PC-9 (cell line): ENCODE measurements at regions of chr10 and their contacts with region 1.

Region 1: GRCh38 chr10:124418726-124419501 is at the start of gene OAT:
- DNase-seq: peak; percentile 87 to 92
- H3K4me3 ChIP-seq: peak within 1 kb of the TSS; percentile 79
- H3K27ac ChIP-seq: peak within 1 kb of the TSS; percentile 56; the same call in 1 of the 2 replicates
- H3K4me1 ChIP-seq: peaks cover 18% of the 10 kb centered on the region; the same call in 1 of the 2 replicates
- H3K27me3 ChIP-seq: no peaks in the 10 kb centered on the region
- CTCF ChIP-seq: no peak; the same call in 1 of the 2 replicates
- total RNA-seq, gene OAT: 73.8 and 130 TPM in 2 replicates

Region 2: GRCh38 chr10:124429576-124429975 is 10.7 kb after region 1 on chr10:
- CTCF ChIA-PET with region 1: no interaction called
- POLR2A ChIA-PET with region 1: interaction called, 11 read pairs
- intact Hi-C with region 1: no loop called
- DNase-seq: no peak
- H3K4me3 ChIP-seq: no peak overlapping the region
- H3K27ac ChIP-seq: no peak overlapping the region
- H3K4me1 ChIP-seq: peaks cover 13% of the 10 kb centered on the region
- H3K27me3 ChIP-seq: no peaks in the 10 kb centered on the region
- CTCF ChIP-seq: no peak

Region 3: DNA sequence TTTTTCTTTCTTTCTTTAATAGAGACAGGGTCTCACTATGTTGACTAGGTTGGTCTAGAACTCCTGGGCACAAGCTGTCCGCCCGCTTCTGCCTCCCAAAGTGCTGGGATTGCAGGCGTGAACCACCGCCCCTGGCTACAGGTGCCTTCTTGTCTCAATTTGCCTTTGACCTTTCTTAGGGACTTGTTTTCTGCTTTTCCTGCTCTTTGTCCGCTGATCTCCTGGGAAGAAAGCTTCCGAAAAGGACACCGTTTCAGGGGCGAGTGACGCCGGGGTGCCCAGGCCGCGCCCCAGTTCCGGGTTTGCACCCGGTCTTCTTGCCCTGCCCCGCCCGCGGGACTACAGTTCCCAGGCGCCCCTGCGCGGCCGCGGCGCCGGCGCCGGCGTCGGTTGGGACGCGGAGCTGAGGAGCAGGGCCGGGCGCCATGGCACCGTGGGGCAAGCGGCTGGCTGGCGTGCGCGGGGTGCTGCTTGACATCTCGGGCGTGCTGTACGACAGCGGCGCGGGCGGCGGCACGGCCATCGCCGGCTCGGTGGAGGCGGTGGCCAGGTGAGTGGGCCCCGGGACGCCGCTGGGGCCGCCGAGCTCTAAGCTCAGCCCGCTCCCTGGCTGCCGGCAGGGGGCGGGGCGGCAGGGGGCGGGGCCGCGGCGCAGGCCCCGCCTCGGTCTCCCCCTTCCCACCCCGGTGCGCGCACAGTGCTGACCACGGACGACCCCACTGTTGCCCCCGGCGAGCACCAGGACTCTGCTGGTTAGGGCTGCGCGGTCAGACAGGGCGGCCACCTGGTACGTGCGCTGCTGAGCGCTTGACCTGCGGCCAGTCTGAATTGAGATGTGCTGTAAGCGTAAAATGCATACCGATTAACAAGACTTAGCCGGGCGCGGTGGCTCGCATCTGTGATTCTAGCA is 42.8 kb after region 1 on chr10 and contains the start of gene LHPP:
- CTCF ChIA-PET with region 1: no interaction called
- POLR2A ChIA-PET with region 1: interaction called, 6 read pairs
- intact Hi-C with region 1: loop called (anchors 1 kb)
- DNase-seq: peak; percentile 53 to 71
- H3K4me3 ChIP-seq: peak within 1 kb of the TSS; percentile 75
- H3K27ac ChIP-seq: peak within 1 kb of the TSS; percentile 52
- H3K4me1 ChIP-seq: peaks cover 39% of the 10 kb centered on the region
- H3K27me3 ChIP-seq: no peaks in the 10 kb centered on the region
- CTCF ChIP-seq: peak; percentile 8; the same call in 1 of the 2 replicates
- total RNA-seq, gene LHPP: 23.3 and 24.7 TPM in 2 replicates

Region 4: DNA sequence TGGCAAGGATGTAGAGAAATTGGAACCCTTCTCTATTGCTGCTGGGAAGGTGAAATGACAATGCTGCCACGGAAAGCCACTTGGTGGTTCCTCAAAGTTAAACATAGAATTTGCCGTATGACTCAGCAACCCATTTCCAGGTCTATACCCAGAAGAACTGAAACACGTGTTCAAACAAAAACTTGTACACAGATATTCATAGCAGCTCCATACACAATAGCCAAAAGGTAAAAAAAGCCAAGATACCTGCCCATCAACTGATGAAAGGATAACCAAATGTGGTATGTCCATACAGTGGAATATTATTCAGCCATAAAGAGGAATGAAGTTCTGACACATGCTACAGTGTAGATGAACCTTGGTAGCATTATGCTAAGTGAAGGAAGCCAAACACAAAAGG is 81.8 kb after region 1 on chr10:
- CTCF ChIA-PET with region 1: no interaction called
- POLR2A ChIA-PET with region 1: no interaction called
- intact Hi-C with region 1: loop called (anchors 5 kb)
- DNase-seq: no peak
- H3K4me3 ChIP-seq: no peak overlapping the region
- H3K27ac ChIP-seq: no peak overlapping the region
- H3K4me1 ChIP-seq: no peaks in the 10 kb centered on the region
- H3K27me3 ChIP-seq: no peaks in the 10 kb centered on the region
- CTCF ChIP-seq: no peak

Region 5: DNA sequence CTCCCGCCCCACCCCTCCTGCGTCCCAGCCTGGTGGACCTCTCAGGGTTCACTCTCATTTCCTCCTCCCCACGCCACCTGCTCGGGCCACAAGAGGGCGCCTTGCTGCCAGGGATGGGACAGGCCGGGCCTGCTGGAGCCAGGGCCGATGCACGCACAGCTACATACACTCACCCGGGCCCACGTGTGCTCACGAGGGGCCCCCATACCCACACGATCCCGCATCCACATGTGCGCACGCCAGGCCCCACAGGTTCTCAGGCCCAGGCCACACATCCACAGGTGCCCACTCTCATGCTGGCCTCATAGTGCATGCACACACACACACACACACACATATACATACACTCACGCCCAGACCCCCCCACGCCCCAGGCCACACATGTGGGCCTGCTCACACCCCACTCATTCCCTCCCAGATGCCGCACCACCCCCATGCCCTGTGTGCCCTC is 111.3 kb after region 1 on chr10:
- CTCF ChIA-PET with region 1: no interaction called
- POLR2A ChIA-PET with region 1: no interaction called
- intact Hi-C with region 1: loop called (anchors 5 kb)
- DNase-seq: peak; percentile 45 to 79
- H3K4me3 ChIP-seq: no peak overlapping the region
- H3K27ac ChIP-seq: no peak overlapping the region
- H3K4me1 ChIP-seq: no peaks in the 10 kb centered on the region
- H3K27me3 ChIP-seq: no peaks in the 10 kb centered on the region
- CTCF ChIP-seq: peak; percentile 77